Psoas muscle (tissue), 8 donors: ENCODE measurements at regions of chr7 and their contacts with region 1.

Region 1: GRCh38 chr7:84640637-84641036 is 446.0 kb upstream of the SEMA3A start:
- DNase-seq: no peak
- ATAC-seq: no peak
- H3K4me3 ChIP-seq: no peak overlapping the region
- H3K27ac ChIP-seq: no peak overlapping the region
- H3K4me1 ChIP-seq: no peaks in the 10 kb centered on the region
- H3K27me3 ChIP-seq: no peaks in the 10 kb centered on the region
- CTCF ChIP-seq: no peak

Region 2: DNA sequence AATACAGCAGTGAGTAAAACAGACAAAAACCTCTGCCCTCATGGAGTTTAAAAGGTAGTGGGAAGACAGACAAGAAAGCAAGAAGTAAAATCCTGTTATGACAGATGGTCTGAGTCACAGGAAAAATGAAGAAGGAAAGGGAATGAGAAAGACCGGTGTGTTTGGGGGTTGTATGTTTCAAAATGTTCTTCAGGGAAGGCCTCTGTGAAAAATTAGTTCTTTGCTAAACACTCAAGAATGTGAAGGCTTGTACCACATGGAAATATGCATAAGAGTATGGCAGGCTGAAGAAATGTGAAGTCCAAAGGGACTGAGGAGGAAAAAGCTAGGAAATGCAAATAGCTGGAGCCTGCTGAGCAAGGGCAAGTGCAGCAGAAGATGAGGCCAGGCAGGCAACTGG is 130.1 kb before region 1 on chr7:
- intact Hi-C with region 1: no loop called
- DNase-seq: no peak
- ATAC-seq: no peak
- H3K4me3 ChIP-seq: no peak overlapping the region
- H3K27ac ChIP-seq: no peak overlapping the region
- H3K4me1 ChIP-seq: no peaks in the 10 kb centered on the region
- H3K27me3 ChIP-seq: no peaks in the 10 kb centered on the region
- CTCF ChIP-seq: no peak

Region 3: DNA sequence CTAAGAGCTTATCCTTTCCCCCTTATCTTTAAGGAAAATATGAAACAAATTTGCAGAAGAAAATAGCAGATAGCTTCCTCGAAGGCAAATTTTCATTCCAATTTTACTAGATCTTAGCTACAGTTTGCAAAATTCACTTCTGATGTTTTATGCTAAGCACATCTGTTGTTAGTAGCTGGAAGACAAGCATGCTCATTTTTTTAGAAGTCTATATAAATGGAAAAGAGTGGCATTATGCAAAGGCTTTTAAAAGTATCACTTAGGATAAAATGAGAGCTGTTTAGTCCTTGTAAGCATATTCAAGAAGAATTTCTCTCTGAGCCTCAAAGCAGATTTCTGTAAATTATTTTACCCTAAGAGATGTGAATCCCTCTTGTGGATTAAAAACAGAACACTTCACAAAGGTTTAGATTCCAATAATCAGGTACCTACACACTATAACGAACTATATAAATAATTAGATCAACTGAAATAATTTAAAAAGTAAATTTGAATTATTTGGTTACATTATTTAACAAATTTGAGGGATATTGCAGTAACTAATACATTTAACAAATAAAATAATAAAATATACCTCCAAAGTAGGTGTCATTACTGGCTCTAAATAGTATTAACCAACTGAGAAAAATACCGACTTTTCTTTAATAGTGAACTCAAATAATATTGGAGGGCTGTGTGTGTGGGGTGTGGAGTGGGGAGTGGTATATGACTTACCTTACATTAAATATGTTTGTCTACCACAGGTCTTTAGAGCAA is 239.1 kb after region 1 on chr7:
- intact Hi-C with region 1: loop called in 1 of 2 experiments (anchors 5 kb)
- DNase-seq: no peak
- ATAC-seq: no peak
- H3K4me3 ChIP-seq: no peak overlapping the region
- H3K27ac ChIP-seq: no peak overlapping the region
- H3K4me1 ChIP-seq: no peaks in the 10 kb centered on the region
- H3K27me3 ChIP-seq: no peaks in the 10 kb centered on the region
- CTCF ChIP-seq: no peak